ENCODE measurements at regions of chr6 and their contacts with region 1.

Region 1: GRCh38 chr6:11064836-11065235 is 20.7 kb upstream of the ELOVL2 start:
- DNase-seq: no peak
- ATAC-seq: no peak
- H3K4me3 ChIP-seq: no peak overlapping the region
- H3K27ac ChIP-seq: no peak overlapping the region
- H3K4me1 ChIP-seq: no peaks in the 10 kb centered on the region
- H3K27me3 ChIP-seq: peaks cover 0 to 15% (median 0%) of the 10 kb centered on the region in 7 donors
- CTCF ChIP-seq: no peak

Region 2: GRCh38 chr6:10478187-10479040 is 586.4 kb before region 1 on chr6:
- intact Hi-C with region 1: loop called in 8 of 10 experiments (anchors 5 to 10 kb)
- DNase-seq: no peak
- ATAC-seq: no peak
- H3K4me3 ChIP-seq: no peak overlapping the region
- H3K27ac ChIP-seq: no peak overlapping the region
- H3K4me1 ChIP-seq: no peaks in the 10 kb centered on the region
- H3K27me3 ChIP-seq: peaks cover 0 to 10% (median 0%) of the 10 kb centered on the region in 7 donors
- CTCF ChIP-seq: peak; percentile 34 to 70 (median 59)

Region 3: DNA sequence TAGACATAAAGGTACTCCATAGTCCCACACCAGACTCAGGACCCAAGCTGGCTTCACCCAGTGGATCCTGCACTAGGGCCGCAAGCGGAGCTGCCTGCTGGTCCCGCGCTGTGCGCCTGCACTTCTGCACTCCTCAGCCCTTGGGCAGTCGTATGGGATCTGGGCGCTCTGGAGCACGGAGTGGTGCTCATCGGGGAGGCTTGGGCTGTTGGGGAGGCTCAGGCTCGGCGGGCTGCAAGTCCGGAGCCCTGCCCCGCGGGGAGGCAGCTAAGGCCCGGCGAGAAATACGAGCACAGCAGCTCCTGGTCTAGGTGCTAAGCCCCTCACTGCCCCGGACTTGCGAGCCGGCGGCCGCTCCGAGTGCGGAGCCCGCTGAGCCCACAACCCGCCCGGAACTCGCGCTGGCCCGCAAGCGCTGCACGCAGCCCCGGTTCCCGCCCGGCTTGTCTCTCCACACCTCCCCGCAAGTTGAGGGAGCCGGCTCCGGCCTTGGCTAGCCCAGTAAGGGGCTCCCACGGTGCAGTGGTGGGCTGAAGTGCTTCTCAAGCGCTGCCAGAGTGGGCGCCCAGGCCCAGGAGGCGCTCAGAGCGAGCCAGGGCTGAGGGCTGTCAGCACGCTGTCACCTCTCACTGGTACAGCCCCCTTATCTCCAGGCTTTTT is 577.0 kb before region 1 on chr6:
- intact Hi-C with region 1: loop called in 1 of 10 experiments (anchors 10 kb)
- DNase-seq: no peak
- ATAC-seq: peak in 1 of 8 donors; percentile 30
- H3K4me3 ChIP-seq: peak overlapping the region in 1 of 10 donors; percentile 22
- H3K27ac ChIP-seq: no peak overlapping the region
- H3K4me1 ChIP-seq: no peaks in the 10 kb centered on the region
- H3K27me3 ChIP-seq: peaks cover 0 to 27% (median 0%) of the 10 kb centered on the region in 7 donors
- CTCF ChIP-seq: no peak

Region 4: DNA sequence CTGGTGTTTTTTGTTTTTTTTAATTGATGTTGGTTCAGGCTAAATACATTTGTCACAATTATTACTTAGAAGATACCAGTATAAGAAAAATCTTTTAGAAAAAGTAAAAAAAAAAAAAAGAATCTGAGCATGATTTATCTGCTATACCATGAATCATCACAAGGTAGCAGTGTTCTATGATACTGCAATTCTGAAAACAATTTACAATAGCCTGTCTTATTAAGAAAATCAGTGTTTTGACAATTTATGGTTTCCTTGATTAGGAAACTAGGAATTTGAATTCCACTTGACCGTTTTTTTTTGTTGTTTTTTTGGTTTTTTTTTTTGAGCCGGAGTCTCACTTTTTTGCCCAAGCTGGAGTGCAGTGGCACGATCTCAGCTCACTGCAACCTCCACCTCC is 217.2 kb before region 1 on chr6:
- intact Hi-C with region 1: loop called in 2 of 10 experiments (anchors 5 to 10 kb)
- DNase-seq: no peak
- ATAC-seq: no peak
- H3K4me3 ChIP-seq: no peak overlapping the region
- H3K27ac ChIP-seq: no peak overlapping the region
- H3K4me1 ChIP-seq: no peaks in the 10 kb centered on the region
- H3K27me3 ChIP-seq: no peaks in the 10 kb centered on the region
- CTCF ChIP-seq: peak in 7 of 9 donors; percentile 6 to 40 (median 31)

Region 5: GRCh38 chr6:10854922-10855632 is 209.8 kb before region 1 on chr6:
- intact Hi-C with region 1: loop called in 1 of 10 experiments (anchors 10 kb)
- DNase-seq: no peak
- ATAC-seq: no peak
- H3K4me3 ChIP-seq: no peak overlapping the region
- H3K27ac ChIP-seq: no peak overlapping the region
- H3K4me1 ChIP-seq: no peaks in the 10 kb centered on the region
- H3K27me3 ChIP-seq: no peaks in the 10 kb centered on the region
- CTCF ChIP-seq: no peak

Region 6: DNA sequence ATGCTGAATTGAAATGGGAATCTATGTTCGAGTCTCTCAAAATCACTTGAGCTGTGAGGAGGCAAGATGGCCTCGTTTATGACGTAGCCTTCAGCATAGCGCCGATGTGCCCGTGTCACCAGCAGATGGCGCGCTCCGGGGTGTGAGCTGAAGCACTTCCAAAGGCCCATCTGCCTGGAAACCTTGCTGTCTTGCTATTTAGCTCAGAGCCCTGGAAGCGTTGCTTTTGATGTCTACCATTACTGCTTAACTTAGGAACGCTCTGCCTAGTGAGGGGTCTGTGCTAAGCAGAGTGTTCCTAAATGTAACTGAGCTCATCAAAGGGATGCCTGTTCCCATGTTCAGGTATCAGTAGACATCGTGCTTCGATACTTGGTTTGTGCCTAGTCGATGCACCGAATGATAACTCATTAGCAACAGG is 110.2 kb before region 1 on chr6:
- intact Hi-C with region 1: loop called (anchors 2 to 5 kb)
- DNase-seq: peak; percentile 73 to 78
- ATAC-seq: peak in 7 of 8 donors; percentile 51 to 85 (median 67)
- H3K4me3 ChIP-seq: no peak overlapping the region
- H3K27ac ChIP-seq: no peak overlapping the region
- H3K4me1 ChIP-seq: no peaks in the 10 kb centered on the region
- H3K27me3 ChIP-seq: peaks cover 0 to 7% (median 0%) of the 10 kb centered on the region in 7 donors
- CTCF ChIP-seq: peak; percentile 41 to 84 (median 70)

Region 7: GRCh38 chr6:11030904-11031303 is 33.9 kb before region 1 on chr6:
- intact Hi-C with region 1: loop called in 1 of 10 experiments (anchors 2 kb)
- DNase-seq: no peak
- ATAC-seq: no peak
- H3K4me3 ChIP-seq: no peak overlapping the region
- H3K27ac ChIP-seq: no peak overlapping the region
- H3K4me1 ChIP-seq: peaks cover 0 to 7% (median 4%) of the 10 kb centered on the region in 9 donors
- H3K27me3 ChIP-seq: peaks cover 0 to 21% (median 10%) of the 10 kb centered on the region in 7 donors
- CTCF ChIP-seq: no peak

Region 8: GRCh38 chr6:11277275-11278206 is 212.7 kb after region 1 on chr6:
- intact Hi-C with region 1: no loop called
- DNase-seq: no peak
- ATAC-seq: peak in 7 of 8 donors; percentile 28 to 67 (median 48)
- H3K4me3 ChIP-seq: no peak overlapping the region
- H3K27ac ChIP-seq: peak overlapping the region in 5 of 10 donors; percentile 15 to 68 (median 27)
- H3K4me1 ChIP-seq: peaks cover 0 to 39% (median 0%) of the 10 kb centered on the region in 9 donors
- H3K27me3 ChIP-seq: no peaks in the 10 kb centered on the region
- CTCF ChIP-seq: no peak

Measured in heart right ventricle (tissue), 16 donors.